Left cardiac atrium (tissue), 4 donors: ENCODE measurements at regions of chr19 and their contacts with region 1.

Region 1: GRCh38 chr19:984165-984967 is at the start of gene WDR18:
- DNase-seq: peak; percentile 96
- ATAC-seq: peak; percentile 96 to 97
- total RNA-seq, gene WDR18: 16.2 to 17.2 TPM

Region 2: DNA sequence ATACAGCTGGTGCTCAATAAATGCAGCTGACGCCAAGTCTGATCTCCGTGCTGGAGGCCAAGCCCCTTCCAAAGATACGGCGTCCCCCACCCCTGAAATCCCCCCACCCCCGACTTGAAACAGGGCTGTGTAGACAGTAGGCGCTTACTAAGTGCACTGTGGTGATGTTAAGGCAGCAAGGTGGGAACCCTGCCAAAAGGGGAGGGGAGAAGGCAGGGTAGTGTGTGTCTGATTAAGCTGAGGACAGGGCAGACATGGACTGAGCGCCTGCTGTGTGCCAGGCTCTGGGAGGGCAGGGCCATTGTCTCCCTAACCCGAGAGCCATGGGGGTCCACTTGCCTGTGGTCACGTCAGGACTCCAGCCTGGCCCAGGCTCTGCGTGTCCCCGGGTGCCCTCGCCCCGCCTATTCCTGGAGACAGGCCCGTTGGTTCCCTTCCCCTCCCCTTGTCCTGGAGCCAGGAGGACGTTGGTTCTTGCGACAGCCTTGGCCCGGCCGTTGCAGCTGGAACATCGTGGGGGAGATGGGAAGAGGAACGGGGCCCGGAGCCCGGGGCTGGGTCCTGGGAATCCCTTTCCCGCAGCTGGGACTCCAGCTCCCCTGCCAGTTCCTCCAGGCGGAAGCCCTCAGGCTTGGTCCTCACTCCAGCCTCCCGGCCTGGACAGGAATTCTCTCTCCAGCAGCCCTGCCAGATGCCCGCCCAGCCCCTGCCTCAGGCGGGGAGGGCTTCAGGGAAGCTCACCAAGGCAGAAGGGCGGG is 134.0 kb before region 1 on chr19:
- intact Hi-C with region 1: loop called in 1 of 2 experiments (anchors 10 kb)
- DNase-seq: peak; percentile 94
- ATAC-seq: peak; percentile 84 to 88

Region 3: DNA sequence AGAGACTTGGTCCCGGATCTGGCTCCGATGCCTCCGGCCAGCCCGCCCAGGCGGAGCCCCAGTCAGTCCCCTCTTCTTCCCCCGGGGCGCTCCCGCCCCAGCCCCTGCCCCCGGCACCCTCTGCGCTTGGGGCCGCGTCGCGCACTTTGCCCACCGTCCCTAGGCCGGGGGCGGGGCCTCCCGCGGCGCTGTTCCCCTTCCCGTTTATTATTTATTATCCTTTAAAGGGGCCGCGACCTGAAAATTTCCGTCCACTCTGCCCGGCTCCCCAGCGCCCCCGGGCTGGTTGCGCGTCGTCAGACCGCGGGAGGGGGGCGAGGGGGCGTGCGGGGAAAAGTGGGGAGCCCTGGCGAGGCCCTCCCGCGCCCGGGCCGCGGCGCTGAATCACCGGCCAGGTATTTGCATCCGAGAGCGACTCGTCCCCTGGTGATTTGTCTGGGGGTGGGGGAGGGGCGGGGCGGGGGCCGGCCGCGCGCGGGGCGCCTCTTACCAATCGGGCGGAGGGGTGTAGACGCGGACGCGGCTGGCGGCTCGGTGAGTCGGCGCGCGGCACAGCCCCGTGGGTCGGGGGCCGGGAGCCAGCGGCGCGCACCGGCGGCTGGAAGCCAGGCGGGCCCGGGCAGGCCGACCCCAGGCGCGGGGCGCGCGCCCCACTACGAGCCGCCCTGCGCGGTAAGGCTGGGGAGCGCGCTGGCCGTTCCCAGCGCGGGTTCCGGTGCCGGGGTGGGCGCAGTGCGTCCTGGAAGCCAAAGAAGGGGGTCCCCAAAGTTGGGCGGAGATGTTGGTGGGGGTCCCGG is 58.6 kb before region 1 on chr19 and contains the start of gene ARID3A:
- intact Hi-C with region 1: loop called (anchors 1 to 2 kb)
- DNase-seq: peak; percentile 83
- ATAC-seq: peak; percentile 84
- total RNA-seq, gene ARID3A: 5.3 to 5.8 TPM

Region 4: GRCh38 chr19:1046836-1047695 is 62.7 kb after region 1 on chr19:
- intact Hi-C with region 1: no loop called
- DNase-seq: peak; percentile 31
- ATAC-seq: no peak

Region 5: GRCh38 chr19:1177322-1178114 is 193.2 kb after region 1 on chr19:
- intact Hi-C with region 1: no loop called
- DNase-seq: no peak
- ATAC-seq: peak in 1 of 2 donors; percentile 6